CD8-positive, alpha-beta T cell (primary cell): ENCODE measurements at regions of chr2 and their contacts with region 1.

Region 1: GRCh38 chr2:177332041-177332991 is 60.3 kb upstream of the AGPS start:
- DNase-seq: peak in 8 of 9 experiments; percentile 6 to 79 (median 33)
- ATAC-seq: peak; percentile 87
- H3K4me3 ChIP-seq: no peak overlapping the region
- H3K4me3 Mint-ChIP-seq: no peak overlapping the region
- H3K27ac ChIP-seq: no peak overlapping the region
- H3K27ac Mint-ChIP-seq: no peak overlapping the region
- H3K4me1 ChIP-seq: peaks cover 6% of the 10 kb centered on the region
- H3K4me1 Mint-ChIP-seq: peaks cover 10% of the 10 kb centered on the region
- H3K27me3 ChIP-seq: no peaks in the 10 kb centered on the region
- H3K27me3 Mint-ChIP-seq: no peaks in the 10 kb centered on the region
- CTCF ChIP-seq: peak; percentile 73

Region 2: DNA sequence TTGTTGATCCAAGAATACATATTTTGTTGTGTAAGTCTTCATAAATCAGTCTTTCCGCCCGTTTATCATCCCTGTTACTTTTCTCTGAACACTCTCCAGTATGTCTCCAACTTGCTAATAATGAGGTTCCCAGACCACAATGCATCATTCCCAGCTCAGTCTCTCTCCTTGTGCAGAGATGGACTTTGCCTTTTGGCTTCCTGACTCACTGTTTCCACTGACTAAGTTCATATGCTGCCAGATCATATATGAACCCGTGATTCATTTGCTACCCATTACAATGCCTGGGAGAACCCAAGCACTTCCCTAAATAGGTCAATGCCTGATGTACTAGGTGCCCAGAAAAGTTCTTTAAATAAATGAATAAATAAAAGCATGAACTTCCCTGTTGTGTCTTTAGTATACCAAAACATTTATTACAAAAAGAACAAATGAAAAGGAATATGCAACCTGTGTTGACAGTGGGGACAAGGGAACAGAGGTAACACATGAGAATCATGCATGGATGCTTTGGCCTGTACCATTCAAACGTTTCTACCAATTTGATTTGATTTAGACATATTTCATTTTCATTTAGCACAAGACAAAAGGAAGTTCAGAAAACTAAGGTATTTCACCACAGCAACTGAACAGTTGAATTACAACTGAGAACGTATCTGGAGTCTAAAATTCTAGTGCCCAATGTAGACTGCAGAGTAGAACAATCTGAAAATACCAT is 335.1 kb before region 1 on chr2:
- CTCF ChIA-PET with region 1: no interaction called
- POLR2A ChIA-PET with region 1: no interaction called
- intact Hi-C with region 1: no loop called
- DNase-seq: peak in 2 of 9 experiments; percentile 6 to 36
- ATAC-seq: peak; percentile 34
- H3K4me3 ChIP-seq: peak overlapping the region; percentile 12 to 21
- H3K4me3 Mint-ChIP-seq: peak overlapping the region; percentile 44
- H3K27ac ChIP-seq: peak overlapping the region in 1 of 2 experiments; percentile 66
- H3K27ac Mint-ChIP-seq: peak overlapping the region; percentile 85
- H3K4me1 ChIP-seq: no peaks in the 10 kb centered on the region
- H3K4me1 Mint-ChIP-seq: peaks cover 23% of the 10 kb centered on the region
- H3K27me3 ChIP-seq: no peaks in the 10 kb centered on the region
- H3K27me3 Mint-ChIP-seq: no peaks in the 10 kb centered on the region
- CTCF ChIP-seq: no peak

Region 3: DNA sequence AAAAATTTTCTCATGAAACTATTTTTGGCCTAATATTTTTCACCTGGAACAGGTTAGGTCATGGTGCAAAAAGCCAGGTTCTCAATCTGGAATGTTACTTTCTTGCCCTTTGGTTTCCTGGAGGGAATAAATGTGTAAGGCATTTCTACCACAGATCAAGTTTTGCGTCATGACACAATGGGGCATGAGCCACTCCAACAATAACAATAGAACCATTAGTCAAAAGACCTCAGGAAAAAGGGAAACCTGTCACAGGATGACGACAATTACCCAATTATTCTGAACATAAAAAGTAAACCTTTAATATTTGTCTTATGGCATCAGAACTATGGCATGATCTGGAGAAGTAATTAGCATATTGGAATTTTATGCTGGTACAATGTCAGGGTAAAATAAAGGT is 207.9 kb before region 1 on chr2:
- CTCF ChIA-PET with region 1: no interaction called
- POLR2A ChIA-PET with region 1: no interaction called
- intact Hi-C with region 1: no loop called
- DNase-seq: no peak
- ATAC-seq: no peak
- H3K4me3 ChIP-seq: no peak overlapping the region
- H3K4me3 Mint-ChIP-seq: no peak overlapping the region
- H3K27ac ChIP-seq: no peak overlapping the region
- H3K27ac Mint-ChIP-seq: no peak overlapping the region
- H3K4me1 ChIP-seq: no peaks in the 10 kb centered on the region
- H3K4me1 Mint-ChIP-seq: peaks cover 2% of the 10 kb centered on the region
- H3K27me3 ChIP-seq: no peaks in the 10 kb centered on the region
- H3K27me3 Mint-ChIP-seq: peaks cover 2% of the 10 kb centered on the region
- CTCF ChIP-seq: no peak

Region 4: DNA sequence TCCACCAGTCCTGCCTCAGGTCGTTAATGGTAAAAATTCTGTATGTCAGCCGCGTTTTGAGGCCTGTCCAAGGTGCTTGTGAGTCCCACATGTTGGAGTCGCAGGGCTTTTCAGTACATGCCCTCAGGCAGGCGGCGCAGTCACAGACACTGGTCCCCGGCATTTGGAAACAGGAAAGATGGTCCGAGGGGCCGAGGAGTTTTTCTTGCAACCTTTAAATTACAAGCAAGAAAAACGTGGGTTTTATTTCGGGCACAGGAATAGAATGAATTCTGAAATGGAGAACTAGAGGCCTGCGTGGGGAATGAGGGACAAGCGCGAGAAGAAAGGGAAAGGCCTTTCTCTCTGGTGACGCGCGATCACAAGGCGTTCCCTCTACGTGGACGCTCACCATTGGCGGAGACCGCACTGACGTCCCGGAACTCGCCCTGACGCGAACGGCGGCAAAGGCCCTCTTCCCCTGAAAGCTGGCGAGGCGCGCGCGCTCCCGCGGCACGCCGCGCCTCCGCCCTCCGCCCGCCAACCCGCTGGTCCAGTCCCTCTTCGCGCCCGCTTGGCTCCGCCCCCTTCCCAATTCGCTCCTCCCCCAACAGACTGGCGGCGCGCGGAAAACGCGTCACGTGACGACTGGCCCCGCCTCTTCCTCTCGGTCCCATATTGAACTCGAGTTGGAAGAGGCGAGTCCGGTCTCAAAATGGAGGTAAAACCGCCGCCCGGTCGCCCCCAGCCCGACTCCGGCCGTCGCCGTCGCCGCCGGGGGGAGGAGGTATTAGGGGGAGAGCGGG is 120.0 kb before region 1 on chr2 and contains the start of gene HNRNPA3:
- CTCF ChIA-PET with region 1: interaction called, 4 read pairs
- POLR2A ChIA-PET with region 1: no interaction called
- intact Hi-C with region 1: loop called in 1 of 2 experiments (anchors 1 kb)
- DNase-seq: peak; percentile 99 to 100 (median 100)
- ATAC-seq: peak; percentile 86
- H3K4me3 ChIP-seq: peak within 1 kb of the TSS; percentile 69 to 83
- H3K4me3 Mint-ChIP-seq: peak within 1 kb of the TSS; percentile 88
- H3K27ac ChIP-seq: peak within 1 kb of the TSS; percentile 99 to 100
- H3K27ac Mint-ChIP-seq: peak within 1 kb of the TSS; percentile 100
- H3K4me1 ChIP-seq: peaks cover 50% of the 10 kb centered on the region
- H3K4me1 Mint-ChIP-seq: peaks cover 51% of the 10 kb centered on the region
- H3K27me3 ChIP-seq: no peaks in the 10 kb centered on the region
- H3K27me3 Mint-ChIP-seq: no peaks in the 10 kb centered on the region
- CTCF ChIP-seq: no peak
- total RNA-seq, gene HNRNPA3: 144 to 160 TPM

Region 5: DNA sequence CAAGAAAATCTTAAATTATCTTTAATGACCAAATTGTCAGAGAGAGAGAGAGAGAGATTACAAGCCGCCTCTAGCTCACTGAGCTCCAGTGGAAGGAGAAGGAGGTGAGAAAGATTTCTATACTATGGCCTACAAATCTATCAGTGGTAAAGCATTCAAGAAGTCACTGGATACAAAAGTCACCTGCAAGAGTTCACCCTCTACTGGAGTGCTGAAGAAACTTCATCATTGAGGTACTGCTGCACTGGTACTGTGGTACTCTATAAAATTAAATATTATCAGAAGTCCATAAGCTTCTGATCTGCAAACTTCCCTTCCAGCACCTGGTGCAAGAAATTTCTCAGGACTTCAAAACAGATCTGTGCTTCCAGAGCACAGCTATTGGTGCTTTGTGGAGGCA is 12.0 kb after region 1 on chr2:
- CTCF ChIA-PET with region 1: interaction called, 21 read pairs
- POLR2A ChIA-PET with region 1: no interaction called
- intact Hi-C with region 1: no loop called
- DNase-seq: no peak
- ATAC-seq: no peak
- H3K4me3 ChIP-seq: no peak overlapping the region
- H3K4me3 Mint-ChIP-seq: no peak overlapping the region
- H3K27ac ChIP-seq: no peak overlapping the region
- H3K27ac Mint-ChIP-seq: no peak overlapping the region
- H3K4me1 ChIP-seq: no peaks in the 10 kb centered on the region
- H3K4me1 Mint-ChIP-seq: no peaks in the 10 kb centered on the region
- H3K27me3 ChIP-seq: no peaks in the 10 kb centered on the region
- H3K27me3 Mint-ChIP-seq: no peaks in the 10 kb centered on the region
- CTCF ChIP-seq: no peak

Region 6: DNA sequence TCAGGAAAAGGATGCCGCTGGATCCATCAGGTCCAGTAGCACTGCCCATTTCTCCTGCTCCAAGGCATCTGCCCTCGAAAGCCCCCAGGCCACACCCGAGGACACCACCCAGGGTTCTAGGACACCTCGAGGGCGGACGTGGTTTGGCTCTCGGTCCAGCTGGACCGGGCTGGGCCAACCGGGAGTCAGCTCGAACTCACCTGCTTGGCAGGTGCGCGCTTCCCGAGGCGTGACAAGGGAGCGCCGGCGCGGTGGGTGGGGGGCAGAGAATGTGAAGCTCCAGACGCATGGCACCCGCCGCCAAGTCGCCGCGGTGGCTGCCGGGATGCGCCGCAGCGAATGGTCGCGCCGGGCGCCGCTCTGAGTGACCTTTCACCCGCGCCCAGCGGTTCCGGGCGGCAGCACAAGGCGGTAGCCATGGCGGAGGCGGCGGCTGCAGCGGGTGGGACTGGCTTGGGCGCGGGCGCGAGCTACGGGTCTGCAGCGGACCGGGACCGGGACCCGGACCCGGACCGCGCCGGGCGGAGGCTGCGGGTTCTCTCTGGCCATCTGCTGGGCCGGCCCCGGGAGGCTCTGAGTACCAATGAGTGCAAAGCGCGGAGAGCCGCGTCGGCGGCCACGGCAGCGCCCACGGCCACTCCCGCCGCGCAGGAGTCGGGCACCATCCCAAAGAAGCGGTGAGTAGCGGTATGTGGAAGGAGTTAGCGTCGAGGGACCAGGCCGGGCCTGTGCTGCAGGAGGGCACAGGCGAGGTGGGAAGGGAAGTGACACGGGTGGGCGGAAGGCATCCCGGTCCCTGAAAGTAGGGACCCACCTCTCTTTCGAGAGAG is 60.3 kb after region 1 on chr2 and contains the start of gene AGPS:
- CTCF ChIA-PET with region 1: interaction called, 16 read pairs
- POLR2A ChIA-PET with region 1: no interaction called
- intact Hi-C with region 1: no loop called
- DNase-seq: peak; percentile 50 to 86 (median 70)
- ATAC-seq: peak; percentile 87
- H3K4me3 ChIP-seq: peak within 1 kb of the TSS; percentile 79 to 86
- H3K4me3 Mint-ChIP-seq: peak within 1 kb of the TSS; percentile 86
- H3K27ac ChIP-seq: peak within 1 kb of the TSS; percentile 55 to 62
- H3K27ac Mint-ChIP-seq: peak within 1 kb of the TSS; percentile 93
- H3K4me1 ChIP-seq: peaks cover 35% of the 10 kb centered on the region
- H3K4me1 Mint-ChIP-seq: peaks cover 59% of the 10 kb centered on the region
- H3K27me3 ChIP-seq: no peaks in the 10 kb centered on the region
- H3K27me3 Mint-ChIP-seq: no peaks in the 10 kb centered on the region
- CTCF ChIP-seq: no peak
- total RNA-seq, gene AGPS: 19.2 to 23.8 TPM

Region 7: GRCh38 chr2:177419274-177419673 is 87.0 kb after region 1 on chr2:
- CTCF ChIA-PET with region 1: interaction called, 86 read pairs
- POLR2A ChIA-PET with region 1: no interaction called
- intact Hi-C with region 1: loop called (anchors 1 kb)
- DNase-seq: no peak
- ATAC-seq: no peak
- H3K4me3 ChIP-seq: no peak overlapping the region
- H3K4me3 Mint-ChIP-seq: no peak overlapping the region
- H3K27ac ChIP-seq: no peak overlapping the region
- H3K27ac Mint-ChIP-seq: no peak overlapping the region
- H3K4me1 ChIP-seq: no peaks in the 10 kb centered on the region
- H3K4me1 Mint-ChIP-seq: peaks cover 27% of the 10 kb centered on the region
- H3K27me3 ChIP-seq: no peaks in the 10 kb centered on the region
- H3K27me3 Mint-ChIP-seq: no peaks in the 10 kb centered on the region
- CTCF ChIP-seq: no peak

Region 8: DNA sequence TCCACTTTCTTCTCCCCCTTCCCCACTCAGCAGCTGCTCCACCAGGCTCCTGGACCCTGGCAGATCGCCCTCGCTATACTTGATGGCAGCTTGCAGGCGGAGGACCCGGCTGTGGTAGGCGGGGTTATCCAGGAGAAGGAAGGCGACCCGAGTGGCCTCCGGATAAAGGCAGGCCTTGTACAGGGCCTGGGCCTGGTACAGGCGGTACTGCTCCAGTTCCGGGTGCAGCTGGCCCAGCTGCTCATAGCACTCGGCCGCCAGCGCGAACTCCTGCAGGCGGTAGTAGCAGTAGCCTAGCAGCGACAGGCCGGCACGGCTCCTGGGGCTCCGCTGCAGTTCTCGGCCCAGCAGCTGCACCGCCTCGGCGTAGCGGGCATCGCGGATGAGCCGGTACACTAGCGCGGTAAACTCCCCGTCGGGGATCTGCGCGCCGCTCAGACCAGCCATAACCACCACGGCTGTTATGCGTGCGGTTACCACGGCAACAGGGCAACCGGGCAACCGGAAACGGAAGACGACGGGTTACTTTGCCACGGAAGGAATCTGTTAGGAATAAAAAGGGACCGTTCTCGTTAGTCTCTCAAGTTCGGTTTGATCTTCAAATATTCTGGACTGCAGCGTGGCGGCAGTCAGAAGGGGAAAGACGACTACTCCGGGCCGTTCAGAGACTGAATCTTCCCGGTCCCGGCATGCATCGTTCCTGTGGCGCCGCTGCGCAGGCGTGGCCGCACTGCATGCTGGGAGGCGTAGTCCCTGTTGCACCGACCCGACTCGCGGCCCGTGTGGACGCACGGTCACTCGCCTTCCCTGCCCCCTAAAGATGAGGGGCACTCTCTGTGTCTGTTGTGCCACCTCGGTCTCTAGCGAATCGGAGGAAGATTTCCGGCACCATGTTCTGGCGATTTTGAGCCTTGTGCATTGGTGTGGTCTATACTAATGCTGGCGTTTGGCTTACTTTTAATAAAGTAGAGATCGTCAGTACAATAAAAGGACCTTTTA is 286.2 kb after region 1 on chr2:
- CTCF ChIA-PET with region 1: no interaction called
- POLR2A ChIA-PET with region 1: no interaction called
- intact Hi-C with region 1: loop called in 1 of 2 experiments (anchors 5 kb)
- DNase-seq: peak; percentile 80 to 96 (median 91)
- ATAC-seq: peak; percentile 89
- H3K4me3 ChIP-seq: peak overlapping the region; percentile 89 to 93
- H3K4me3 Mint-ChIP-seq: peak overlapping the region; percentile 97
- H3K27ac ChIP-seq: peak overlapping the region; percentile 97 to 99
- H3K27ac Mint-ChIP-seq: peak overlapping the region; percentile 98
- H3K4me1 ChIP-seq: peaks cover 8% of the 10 kb centered on the region
- H3K4me1 Mint-ChIP-seq: peaks cover 7% of the 10 kb centered on the region
- H3K27me3 ChIP-seq: no peaks in the 10 kb centered on the region
- H3K27me3 Mint-ChIP-seq: no peaks in the 10 kb centered on the region
- CTCF ChIP-seq: no peak

Region 9: DNA sequence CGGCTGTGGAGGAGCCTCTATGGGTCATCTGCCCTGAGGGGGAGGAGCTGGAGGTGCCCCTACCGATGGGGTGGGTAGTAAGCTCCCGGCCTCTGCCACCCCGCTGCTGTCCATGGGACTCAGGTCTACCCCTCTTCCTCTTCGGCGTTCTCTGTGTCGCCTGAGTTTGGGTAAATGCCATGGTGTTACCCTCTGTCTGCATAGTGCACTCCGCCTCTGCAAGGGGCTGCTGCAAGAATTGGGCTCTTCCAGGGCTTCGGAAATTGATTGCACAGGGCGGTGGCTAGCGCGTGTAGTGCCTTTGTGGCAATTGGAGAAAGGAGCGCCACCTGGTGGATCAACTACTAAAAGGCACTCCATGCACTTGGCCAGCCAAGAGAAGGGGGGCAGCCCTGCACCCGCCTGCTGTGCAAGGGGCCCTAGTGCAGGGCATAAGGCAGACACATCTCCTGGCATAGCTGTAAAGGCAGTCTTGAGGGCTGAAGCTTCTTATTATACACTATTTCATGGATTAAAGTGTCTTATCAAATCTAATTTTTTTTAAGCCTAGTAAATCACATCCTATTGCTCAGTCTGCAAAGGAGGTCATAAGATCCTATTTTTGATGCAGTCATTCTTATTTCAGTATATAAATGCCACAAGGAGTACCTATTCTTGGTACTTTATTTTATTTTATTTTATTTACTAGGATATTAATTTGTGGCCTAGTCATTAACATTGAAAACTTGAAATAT is 431.4 kb after region 1 on chr2:
- CTCF ChIA-PET with region 1: interaction called, 11 read pairs
- POLR2A ChIA-PET with region 1: no interaction called
- intact Hi-C with region 1: loop called (anchors 1 to 2 kb)
- DNase-seq: peak; percentile 57 to 83 (median 77)
- ATAC-seq: peak; percentile 97
- H3K4me3 ChIP-seq: no peak overlapping the region
- H3K4me3 Mint-ChIP-seq: no peak overlapping the region
- H3K27ac ChIP-seq: no peak overlapping the region
- H3K27ac Mint-ChIP-seq: no peak overlapping the region
- H3K4me1 ChIP-seq: peaks cover 5% of the 10 kb centered on the region
- H3K4me1 Mint-ChIP-seq: peaks cover 6% of the 10 kb centered on the region
- H3K27me3 ChIP-seq: no peaks in the 10 kb centered on the region
- H3K27me3 Mint-ChIP-seq: peaks cover 12% of the 10 kb centered on the region
- CTCF ChIP-seq: peak; percentile 82